IMR-90 (cell line): ENCODE measurements at regions of chrX and their contacts with region 1.

Region 1: DNA sequence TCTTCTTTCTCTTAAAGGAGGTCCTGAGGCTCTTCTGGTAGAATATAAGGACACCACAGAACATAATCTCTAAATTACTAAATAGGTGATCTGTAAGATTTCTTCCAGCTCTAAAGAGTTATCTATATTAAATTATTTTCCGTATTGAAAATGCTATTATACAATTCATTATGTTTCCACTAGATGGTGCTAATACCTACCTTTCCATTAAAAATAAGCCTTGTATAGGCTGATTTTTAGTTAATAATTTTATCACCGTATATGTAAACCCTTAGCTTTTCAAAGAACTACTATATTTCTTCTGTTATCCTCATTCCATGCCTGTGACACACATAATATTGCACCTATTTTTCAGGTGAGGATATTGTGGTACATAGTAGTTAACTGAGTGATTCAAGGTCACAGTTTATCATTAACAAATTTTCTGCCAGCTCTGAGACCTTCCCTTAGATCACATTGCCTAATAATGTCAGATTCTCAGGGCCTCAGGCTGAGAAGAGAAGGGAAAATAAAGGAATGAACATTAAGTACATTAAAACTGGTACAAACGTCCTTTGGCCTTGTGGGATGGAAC is 138.8 kb downstream of the TEX11 start:
- DNase-seq: peak; percentile 5
- ATAC-seq: no peak
- H3K4me3 ChIP-seq: no peak overlapping the region
- H3K27ac ChIP-seq: no peak overlapping the region
- H3K4me1 ChIP-seq: no peaks in the 10 kb centered on the region
- H3K27me3 ChIP-seq: no peaks in the 10 kb centered on the region; the same call in 1 of the 2 replicates
- CTCF ChIP-seq: peak; percentile 52
- POLR2A ChIP-seq: no peak
- RAD21 ChIP-seq: peak; percentile 47

Region 2: GRCh38 chrX:70386235-70386634 is 383.5 kb before region 1 on chrX:
- CTCF ChIA-PET with region 1: no interaction called
- POLR2A ChIA-PET with region 1: no interaction called
- dilution Hi-C with region 1: no loop called
- in situ Hi-C with region 1: no loop called
- intact Hi-C with region 1: no loop called
- DNase-seq: peak; percentile 37
- ATAC-seq: no peak
- H3K4me3 ChIP-seq: no peak overlapping the region
- H3K27ac ChIP-seq: no peak overlapping the region
- H3K4me1 ChIP-seq: no peaks in the 10 kb centered on the region
- H3K27me3 ChIP-seq: no peaks in the 10 kb centered on the region
- CTCF ChIP-seq: no peak
- POLR2A ChIP-seq: no peak
- RAD21 ChIP-seq: no peak

Region 3: GRCh38 chrX:70908541-70908940 is 138.8 kb after region 1 on chrX and contains the start of gene TEX11:
- CTCF ChIA-PET with region 1: no interaction called
- POLR2A ChIA-PET with region 1: no interaction called
- dilution Hi-C with region 1: no loop called
- in situ Hi-C with region 1: no loop called
- intact Hi-C with region 1: no loop called
- DNase-seq: no peak
- ATAC-seq: no peak
- H3K4me3 ChIP-seq: no peak within 1 kb of the TSS
- H3K27ac ChIP-seq: no peak within 1 kb of the TSS
- H3K4me1 ChIP-seq: no peaks in the 10 kb centered on the region
- H3K27me3 ChIP-seq: no peaks in the 10 kb centered on the region
- CTCF ChIP-seq: no peak
- POLR2A ChIP-seq: no peak
- RAD21 ChIP-seq: no peak
- total RNA-seq, gene TEX11: not detected in 2 replicates

Region 4: DNA sequence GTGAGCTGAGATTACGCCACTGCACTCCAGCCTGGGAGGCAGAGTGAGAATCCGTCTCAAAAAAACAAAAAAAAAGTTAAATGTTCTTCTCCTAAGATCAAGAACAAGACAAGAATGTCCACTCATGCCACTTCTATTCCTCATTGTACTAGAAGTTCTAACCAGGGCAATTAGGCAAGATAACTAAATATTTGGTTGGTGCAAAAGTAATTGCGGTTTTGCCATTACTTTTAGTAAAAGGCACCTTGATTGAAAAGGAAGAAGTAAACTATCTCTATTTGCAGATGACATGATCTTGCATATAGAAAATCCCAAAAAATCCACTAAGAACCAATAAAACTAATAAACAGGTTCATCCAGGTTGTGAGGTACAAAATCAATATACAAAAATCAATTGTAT is 185.1 kb after region 1 on chrX:
- CTCF ChIA-PET with region 1: no interaction called
- POLR2A ChIA-PET with region 1: no interaction called
- dilution Hi-C with region 1: no loop called
- in situ Hi-C with region 1: no loop called
- intact Hi-C with region 1: loop called (anchors 5 kb)
- DNase-seq: no peak
- ATAC-seq: no peak
- H3K4me3 ChIP-seq: no peak overlapping the region
- H3K27ac ChIP-seq: no peak overlapping the region
- H3K4me1 ChIP-seq: no peaks in the 10 kb centered on the region
- H3K27me3 ChIP-seq: 0 out of 2 replicates have a peak, but pooled peaks cover 1% of the 10 kb centered on the region
- CTCF ChIP-seq: no peak
- POLR2A ChIP-seq: no peak
- RAD21 ChIP-seq: no peak

Region 5: GRCh38 chrX:71637848-71638247 is 868.1 kb after region 1 on chrX:
- CTCF ChIA-PET with region 1: no interaction called
- POLR2A ChIA-PET with region 1: no interaction called
- dilution Hi-C with region 1: no loop called
- in situ Hi-C with region 1: loop called (anchors 25 kb)
- intact Hi-C with region 1: no loop called
- DNase-seq: peak; percentile 70
- ATAC-seq: peak; percentile 71
- H3K4me3 ChIP-seq: peak overlapping the region; percentile 7; the same call in 1 of the 2 replicates
- H3K27ac ChIP-seq: no peak overlapping the region
- H3K4me1 ChIP-seq: no peaks in the 10 kb centered on the region
- H3K27me3 ChIP-seq: peaks cover 1% of the 10 kb centered on the region; the same call in 1 of the 2 replicates
- CTCF ChIP-seq: no peak
- POLR2A ChIP-seq: no peak
- RAD21 ChIP-seq: no peak